ENCODE measurements at regions of chr11 and their contacts with region 1.

Region 1: GRCh38 chr11:57751676-57752253 is at the start of gene BTBD18:
- DNase-seq: peak; percentile 76
- H3K4me3 ChIP-seq: no peak within 1 kb of the TSS
- H3K27ac ChIP-seq: no peak within 1 kb of the TSS
- H3K4me1 ChIP-seq: no peaks in the 10 kb centered on the region
- H3K27me3 ChIP-seq: no peaks in the 10 kb centered on the region
- CTCF ChIP-seq: peak; percentile 75
- total RNA-seq, gene BTBD18: not detected in 2 replicates

Region 2: GRCh38 chr11:58006940-58007339 is 255.2 kb after region 1 on chr11:
- CTCF ChIA-PET with region 1: no interaction called
- POLR2A ChIA-PET with region 1: no interaction called
- intact Hi-C with region 1: loop called (anchors 10 kb)
- DNase-seq: peak; percentile 27
- H3K4me3 ChIP-seq: no peak overlapping the region
- H3K27ac ChIP-seq: no peak overlapping the region
- H3K4me1 ChIP-seq: peaks cover 15% of the 10 kb centered on the region
- H3K27me3 ChIP-seq: no peaks in the 10 kb centered on the region
- CTCF ChIP-seq: no peak

Region 3: DNA sequence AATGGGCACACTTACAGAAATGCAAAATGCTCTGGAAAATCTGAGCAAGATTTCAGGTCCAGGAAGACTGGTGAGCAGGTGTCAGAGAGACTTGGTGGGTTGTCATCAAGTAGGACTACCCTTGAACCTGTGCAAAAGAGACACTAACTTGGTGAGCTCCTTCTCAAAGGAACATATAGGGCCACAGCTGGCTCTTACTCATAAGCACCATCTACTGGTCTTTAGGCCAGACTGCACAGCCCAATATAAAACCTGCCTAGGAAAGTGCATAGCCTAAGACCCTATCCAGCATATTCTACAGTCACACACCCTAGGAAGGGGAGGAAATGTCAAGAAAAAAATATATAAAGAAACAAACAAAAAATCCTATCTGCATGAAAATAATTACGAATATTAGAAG is 534.5 kb after region 1 on chr11:
- CTCF ChIA-PET with region 1: no interaction called
- POLR2A ChIA-PET with region 1: no interaction called
- intact Hi-C with region 1: loop called (anchors 10 kb)
- DNase-seq: peak; percentile 54
- H3K4me3 ChIP-seq: no peak overlapping the region
- H3K27ac ChIP-seq: no peak overlapping the region
- H3K4me1 ChIP-seq: no peaks in the 10 kb centered on the region
- H3K27me3 ChIP-seq: no peaks in the 10 kb centered on the region
- CTCF ChIP-seq: peak; percentile 82

Region 4: DNA sequence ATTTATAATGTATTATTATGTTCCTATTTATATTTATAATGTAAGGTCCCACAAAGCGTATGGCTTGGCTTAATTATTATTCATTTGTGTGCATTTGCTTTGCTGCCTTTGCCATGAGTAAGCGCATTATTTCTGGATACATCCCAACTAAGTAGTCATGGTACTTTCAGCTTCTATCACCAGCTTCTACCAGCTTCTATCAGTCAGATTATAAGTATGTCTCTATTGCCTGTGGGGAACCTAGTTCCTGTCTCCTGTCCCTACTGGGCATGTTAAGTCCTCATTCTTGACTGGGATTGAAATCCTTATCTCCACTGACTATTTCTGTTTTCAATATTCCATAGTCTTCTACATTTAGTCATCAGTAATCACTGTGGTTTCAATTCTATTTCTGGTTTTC is 549.8 kb after region 1 on chr11:
- CTCF ChIA-PET with region 1: no interaction called
- POLR2A ChIA-PET with region 1: no interaction called
- intact Hi-C with region 1: no loop called
- DNase-seq: no peak
- H3K4me3 ChIP-seq: no peak overlapping the region
- H3K27ac ChIP-seq: no peak overlapping the region
- H3K4me1 ChIP-seq: no peaks in the 10 kb centered on the region
- H3K27me3 ChIP-seq: no peaks in the 10 kb centered on the region
- CTCF ChIP-seq: no peak

Measured in A673 (cell line).